Astrocyte of the cerebellum (primary cell): ENCODE measurements at regions of chr6 and their contacts with region 1.

Region 1: DNA sequence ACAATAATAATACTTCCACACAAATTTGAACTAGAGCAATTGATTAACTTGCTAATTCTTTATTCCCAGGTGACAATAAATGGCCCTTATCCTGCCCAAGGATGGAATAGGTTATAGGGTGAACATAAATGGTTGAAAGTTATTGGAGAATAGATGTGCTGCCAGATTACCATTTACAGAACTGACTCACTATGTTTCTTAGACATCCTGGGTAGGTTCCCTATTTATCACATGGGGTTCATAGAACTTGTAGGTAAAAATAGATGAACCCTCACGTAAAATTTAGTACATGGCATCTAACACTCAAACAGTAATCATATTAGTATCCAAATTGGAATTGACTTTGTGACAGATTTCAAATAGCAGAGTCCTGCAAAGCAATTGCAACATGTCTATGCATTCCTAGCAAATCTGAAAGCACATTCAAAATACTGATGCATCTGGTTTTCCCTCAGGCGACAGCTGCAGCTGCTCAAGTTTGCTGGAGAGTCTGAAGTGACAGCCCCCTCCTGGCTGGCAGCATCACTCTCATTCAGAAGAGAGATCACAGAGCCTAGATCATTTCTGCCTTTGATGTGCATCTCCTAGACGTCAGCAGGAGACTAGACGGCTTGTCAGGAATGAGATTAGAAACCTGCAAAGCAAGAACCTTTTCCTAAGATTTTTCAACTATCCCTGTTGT is 80.2 kb upstream of the RNF217 start:
- DNase-seq: peak; percentile 1
- H3K4me3 ChIP-seq: no peak overlapping the region
- CTCF ChIP-seq: no peak

Region 2: GRCh38 chr6:124829822-124830221 is 52.2 kb before region 1 on chr6:
- in situ Hi-C with region 1: no loop called
- DNase-seq: no peak
- H3K4me3 ChIP-seq: no peak overlapping the region
- CTCF ChIP-seq: no peak

Region 3: GRCh38 chr6:124955108-124955856 is 73.2 kb after region 1 on chr6:
- in situ Hi-C with region 1: no loop called
- DNase-seq: no peak
- H3K4me3 ChIP-seq: no peak overlapping the region
- CTCF ChIP-seq: no peak

Region 4: DNA sequence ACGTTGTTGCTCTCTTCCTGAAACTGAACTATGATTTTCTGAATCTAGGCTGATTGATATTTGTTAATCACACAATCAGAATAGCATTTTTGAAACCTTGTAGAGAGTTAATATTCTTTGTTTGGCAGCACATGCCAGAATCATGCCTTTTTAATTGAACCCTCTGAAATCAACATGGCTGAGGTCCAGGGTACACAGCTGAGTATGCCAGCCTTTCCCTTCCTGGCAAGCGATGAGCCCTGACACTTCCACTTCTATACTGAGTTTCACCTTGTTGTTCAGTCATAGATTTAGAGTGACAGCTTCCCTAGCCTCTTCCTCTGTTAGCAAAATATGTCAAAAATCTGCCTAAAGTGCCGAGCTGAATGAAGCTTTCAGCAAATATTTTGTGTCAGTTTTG is 412.9 kb after region 1 on chr6:
- in situ Hi-C with region 1: loop called (anchors 25 kb)
- DNase-seq: no peak
- H3K4me3 ChIP-seq: no peak overlapping the region
- CTCF ChIP-seq: no peak